CD8-positive, alpha-beta T cell (primary cell): ENCODE measurements at regions of chr17 and their contacts with region 1.

Region 1: GRCh38 chr17:56939901-56940343 is 20.9 kb downstream of the COIL start:
- DNase-seq: peak in 2 of 9 experiments; percentile 63 to 72
- ATAC-seq: peak; percentile 67
- H3K4me3 ChIP-seq: no peak overlapping the region
- H3K4me3 Mint-ChIP-seq: no peak overlapping the region
- H3K27ac ChIP-seq: no peak overlapping the region
- H3K27ac Mint-ChIP-seq: no peak overlapping the region
- H3K4me1 ChIP-seq: no peaks in the 10 kb centered on the region
- H3K4me1 Mint-ChIP-seq: no peaks in the 10 kb centered on the region
- H3K27me3 ChIP-seq: no peaks in the 10 kb centered on the region
- H3K27me3 Mint-ChIP-seq: no peaks in the 10 kb centered on the region
- CTCF ChIP-seq: peak; percentile 89

Region 2: DNA sequence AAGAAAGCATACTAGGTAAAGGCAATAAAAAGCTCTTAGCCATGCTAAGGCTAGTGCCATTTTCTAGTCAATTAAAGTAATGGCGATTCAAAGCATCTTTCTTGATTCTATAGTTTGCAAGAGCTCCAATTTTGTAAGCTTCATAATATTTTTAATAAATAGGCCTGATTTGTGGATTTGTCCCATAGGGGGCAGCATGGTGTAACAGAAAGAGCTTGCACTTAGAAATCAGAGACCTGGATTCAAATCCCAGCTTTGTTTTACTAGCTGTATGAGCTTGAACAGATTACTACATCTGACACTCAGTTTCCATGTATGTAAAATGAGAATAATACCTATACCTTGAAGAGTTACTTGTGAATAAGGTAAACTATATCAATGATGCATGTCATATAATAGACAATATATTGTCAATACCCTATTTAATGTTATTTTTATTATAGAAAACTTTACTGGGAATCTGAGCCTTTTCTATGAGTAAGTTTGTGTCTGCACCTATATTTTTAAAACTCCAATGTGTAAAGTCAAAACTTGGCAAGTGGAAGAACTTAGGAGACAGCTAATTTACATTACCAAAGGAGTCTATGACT is 440.0 kb before region 1 on chr17:
- CTCF ChIA-PET with region 1: no interaction called
- POLR2A ChIA-PET with region 1: no interaction called
- intact Hi-C with region 1: loop called in 1 of 2 experiments (anchors 5 kb)
- DNase-seq: peak in 4 of 9 experiments; percentile 11 to 39 (median 15)
- ATAC-seq: no peak
- H3K4me3 ChIP-seq: no peak overlapping the region
- H3K4me3 Mint-ChIP-seq: no peak overlapping the region
- H3K27ac ChIP-seq: no peak overlapping the region
- H3K27ac Mint-ChIP-seq: no peak overlapping the region
- H3K4me1 ChIP-seq: no peaks in the 10 kb centered on the region
- H3K4me1 Mint-ChIP-seq: no peaks in the 10 kb centered on the region
- H3K27me3 ChIP-seq: no peaks in the 10 kb centered on the region
- H3K27me3 Mint-ChIP-seq: no peaks in the 10 kb centered on the region
- CTCF ChIP-seq: peak; percentile 39

Region 3: DNA sequence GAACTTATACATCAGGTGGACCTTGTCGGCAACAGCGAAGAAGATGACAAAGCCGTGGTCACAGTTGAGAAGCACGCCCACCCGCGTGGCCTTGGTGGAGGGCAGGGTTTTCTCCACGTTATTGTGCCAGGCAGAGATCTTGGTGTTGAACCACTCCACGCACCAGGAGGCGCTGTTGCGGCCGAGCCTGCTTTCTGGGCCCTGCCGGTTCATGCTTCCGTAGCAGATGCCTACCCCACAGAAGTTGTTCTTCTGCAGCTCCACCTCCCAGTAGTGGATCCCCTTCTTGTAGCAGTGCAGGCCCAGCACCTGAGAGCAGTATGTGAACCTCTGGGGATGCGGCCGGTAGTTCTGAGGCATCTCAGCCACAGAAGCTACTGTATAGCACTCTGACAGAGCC is 48.1 kb before region 1 on chr17:
- CTCF ChIA-PET with region 1: interaction called, 55 read pairs
- POLR2A ChIA-PET with region 1: interaction called, 3 read pairs
- intact Hi-C with region 1: loop called (anchors 1 kb)
- DNase-seq: peak; percentile 25 to 73 (median 65)
- ATAC-seq: peak; percentile 74
- H3K4me3 ChIP-seq: no peak overlapping the region
- H3K4me3 Mint-ChIP-seq: no peak overlapping the region
- H3K27ac ChIP-seq: no peak overlapping the region
- H3K27ac Mint-ChIP-seq: no peak overlapping the region
- H3K4me1 ChIP-seq: no peaks in the 10 kb centered on the region
- H3K4me1 Mint-ChIP-seq: peaks cover 2% of the 10 kb centered on the region
- H3K27me3 ChIP-seq: no peaks in the 10 kb centered on the region
- H3K27me3 Mint-ChIP-seq: no peaks in the 10 kb centered on the region
- CTCF ChIP-seq: peak; percentile 32

Region 4: GRCh38 chr17:57045868-57046704 is 106.2 kb after region 1 on chr17:
- CTCF ChIA-PET with region 1: no interaction called
- POLR2A ChIA-PET with region 1: no interaction called
- intact Hi-C with region 1: no loop called
- DNase-seq: peak in 7 of 9 experiments; percentile 1 to 57 (median 27)
- ATAC-seq: peak; percentile 54
- H3K4me3 ChIP-seq: peak overlapping the region; percentile 26 to 49
- H3K4me3 Mint-ChIP-seq: peak overlapping the region; percentile 79
- H3K27ac ChIP-seq: no peak overlapping the region
- H3K27ac Mint-ChIP-seq: no peak overlapping the region
- H3K4me1 ChIP-seq: peaks cover 5% of the 10 kb centered on the region
- H3K4me1 Mint-ChIP-seq: peaks cover 22% of the 10 kb centered on the region
- H3K27me3 ChIP-seq: peaks cover 14 to 18% of the 10 kb centered on the region in 2 experiments
- H3K27me3 Mint-ChIP-seq: peaks cover 58% of the 10 kb centered on the region
- CTCF ChIP-seq: no peak